ENCODE measurements at regions of chr1 and their contacts with region 1.

Region 1: DNA sequence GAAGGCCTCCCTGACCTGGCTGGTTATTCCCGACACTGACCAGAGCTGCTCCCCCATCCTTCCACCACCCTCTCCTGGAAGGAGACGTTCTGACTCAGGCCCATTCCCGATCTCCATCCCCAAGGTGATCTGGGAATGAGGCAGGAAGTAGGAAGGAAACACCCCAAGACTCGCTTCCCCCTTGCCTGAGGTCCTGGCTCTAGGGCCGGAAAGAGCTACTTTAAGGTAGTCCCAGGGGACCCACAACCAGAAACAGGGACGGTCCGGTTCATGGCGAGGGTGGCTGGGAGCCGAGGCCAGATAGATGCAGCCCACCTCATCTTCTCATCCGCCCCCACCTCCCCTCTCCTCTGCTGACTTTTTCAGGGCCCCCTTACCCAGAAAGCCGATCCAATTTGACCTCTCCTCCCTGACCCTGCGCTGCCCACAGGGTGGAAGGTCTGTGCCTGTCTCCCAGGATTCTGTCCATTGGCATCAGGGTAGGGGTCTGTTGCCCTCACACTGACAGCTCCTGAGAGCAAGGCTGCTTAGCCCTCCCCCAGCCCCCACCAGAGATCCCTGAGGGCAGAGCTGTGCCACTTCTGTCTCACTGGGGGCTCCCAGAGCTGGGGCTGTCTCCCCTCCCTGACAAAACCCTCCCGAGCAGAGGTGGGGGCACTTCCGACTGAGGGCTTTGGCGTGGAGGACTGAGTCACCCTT is 2.7 kb upstream of the FAM110D start:
- DNase-seq: peak in 1 of 3 donors; percentile 48
- H3K4me3 ChIP-seq: peak overlapping the region in 4 of 7 experiments; percentile 4 to 49 (median 12)
- H3K27ac ChIP-seq: no peak overlapping the region
- H3K4me1 ChIP-seq: peaks cover 0 to 49% (median 41%) of the 10 kb centered on the region in 4 experiments
- H3K27me3 ChIP-seq: peaks cover 0 to 25% (median 5%) of the 10 kb centered on the region in 5 experiments

Region 2: GRCh38 chr1:26169669-26170471 is 13.7 kb after region 1 on chr1 and contains the start of gene ZNF593:
- CTCF ChIA-PET with region 1: interaction called, 10 read pairs
- POLR2A ChIA-PET with region 1: interaction called, 4 read pairs
- DNase-seq: peak; percentile 89 to 91 (median 91)
- H3K4me3 ChIP-seq: peak within 1 kb of the TSS; percentile 70 to 85 (median 79)
- H3K27ac ChIP-seq: peak within 1 kb of the TSS; percentile 33 to 85
- H3K4me1 ChIP-seq: peaks cover 0 to 25% (median 11%) of the 10 kb centered on the region in 4 experiments
- H3K27me3 ChIP-seq: no peaks in the 10 kb centered on the region

Region 3: GRCh38 chr1:26265405-26265804 is 109.3 kb after region 1 on chr1:
- CTCF ChIA-PET with region 1: no interaction called
- POLR2A ChIA-PET with region 1: no interaction called
- DNase-seq: no peak
- H3K4me3 ChIP-seq: no peak overlapping the region
- H3K27ac ChIP-seq: peak overlapping the region in 1 of 2 experiments; percentile 19
- H3K4me1 ChIP-seq: no peaks in the 10 kb centered on the region
- H3K27me3 ChIP-seq: no peaks in the 10 kb centered on the region

Measured in common myeloid progenitor, CD34-positive (primary cell).